GM12878 (cell line): ENCODE measurements at regions of chrX and their contacts with region 1.

Region 1: GRCh38 chrX:74781507-74782034 is 143.7 kb downstream of the NEXMIF start:
- DNase-seq: peak; percentile 76
- ATAC-seq: peak; percentile 73
- H3K4me3 ChIP-seq: no peak overlapping the region
- H3K27ac ChIP-seq: peak overlapping the region; percentile 85
- H3K4me1 ChIP-seq: peaks cover 10% of the 10 kb centered on the region
- H3K27me3 ChIP-seq: no peaks in the 10 kb centered on the region
- CTCF ChIP-seq: no peak
- EP300 ChIP-seq: no peak
- POLR2A ChIP-seq: no peak
- RAD21 ChIP-seq: peak; percentile 16; the same call in 1 of the 2 replicates

Region 2: GRCh38 chrX:74195605-74196004 is 586.0 kb before region 1 on chrX:
- CTCF ChIA-PET with region 1: no interaction called
- POLR2A ChIA-PET with region 1: no interaction called
- RAD21 ChIA-PET with region 1: no interaction called
- SMC1A ChIA-PET with region 1: no interaction called
- in situ Hi-C with region 1: no loop called
- intact Hi-C with region 1: no loop called
- DNase-seq: no peak
- ATAC-seq: no peak
- H3K4me3 ChIP-seq: no peak overlapping the region
- H3K27ac ChIP-seq: no peak overlapping the region
- H3K4me1 ChIP-seq: no peaks in the 10 kb centered on the region
- H3K27me3 ChIP-seq: no peaks in the 10 kb centered on the region
- CTCF ChIP-seq: no peak
- EP300 ChIP-seq: no peak
- POLR2A ChIP-seq: no peak
- RAD21 ChIP-seq: no peak

Region 3: DNA sequence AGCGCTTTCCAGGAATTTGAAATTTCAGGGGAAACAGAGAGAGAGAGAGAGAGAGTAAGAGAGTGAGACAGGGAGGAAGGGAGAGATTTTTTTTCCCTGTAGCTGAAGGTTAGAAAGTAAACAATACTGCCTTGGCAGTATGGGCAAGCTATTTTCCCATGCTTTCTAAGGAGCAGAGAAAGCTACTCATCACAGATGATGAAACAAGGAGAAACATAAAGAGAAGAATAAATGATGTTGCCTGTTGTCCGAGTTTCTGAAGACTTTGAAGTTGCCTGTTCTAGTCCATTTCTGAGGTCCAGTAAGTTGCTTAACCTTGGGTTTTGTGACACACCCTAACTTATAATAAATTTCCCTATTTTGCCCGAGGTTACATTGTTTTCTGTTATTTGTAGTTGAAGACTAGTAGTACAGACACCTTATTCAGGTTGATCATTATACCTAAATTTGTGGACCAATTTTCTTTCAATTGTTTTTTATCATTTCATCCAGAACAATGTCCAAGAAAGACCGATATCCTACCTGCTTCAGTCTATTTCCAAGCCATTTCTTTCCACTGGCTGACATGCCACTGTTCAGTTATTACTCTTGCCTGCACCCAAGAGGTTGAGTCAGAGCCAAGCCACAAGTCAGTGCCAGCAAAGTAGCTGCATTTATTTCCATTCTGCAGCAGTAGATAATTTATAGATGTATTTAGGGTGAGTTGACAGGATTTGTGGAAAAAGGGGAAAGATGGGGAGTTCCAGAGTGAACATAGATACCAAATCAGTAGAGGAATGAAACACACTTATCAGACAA is 409.9 kb before region 1 on chrX:
- CTCF ChIA-PET with region 1: no interaction called
- POLR2A ChIA-PET with region 1: no interaction called
- RAD21 ChIA-PET with region 1: no interaction called
- SMC1A ChIA-PET with region 1: no interaction called
- in situ Hi-C with region 1: no loop called
- intact Hi-C with region 1: no loop called
- DNase-seq: no peak
- ATAC-seq: no peak
- H3K4me3 ChIP-seq: no peak overlapping the region
- H3K27ac ChIP-seq: no peak overlapping the region
- H3K4me1 ChIP-seq: no peaks in the 10 kb centered on the region
- H3K27me3 ChIP-seq: no peaks in the 10 kb centered on the region
- CTCF ChIP-seq: no peak
- EP300 ChIP-seq: no peak
- POLR2A ChIP-seq: no peak
- RAD21 ChIP-seq: no peak

Region 4: DNA sequence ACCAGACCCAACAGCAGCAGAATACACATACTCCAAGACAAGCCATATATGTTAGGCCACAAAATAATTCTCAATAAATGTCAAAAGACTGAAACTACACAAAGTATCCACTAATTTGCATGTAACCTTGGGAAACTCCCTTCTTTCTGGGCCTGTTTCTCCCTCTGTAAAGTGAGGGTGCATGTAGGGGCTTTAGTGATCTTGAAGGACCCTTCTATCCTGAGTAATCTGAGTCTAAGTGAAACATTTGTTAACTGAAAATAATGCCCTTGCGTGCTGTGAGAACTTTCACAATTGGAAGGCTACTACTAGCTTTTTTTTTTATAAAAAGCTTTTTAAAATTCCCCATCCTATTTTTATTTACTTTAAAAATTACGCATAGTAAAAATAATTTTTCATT is 18.5 kb after region 1 on chrX:
- CTCF ChIA-PET with region 1: interaction called, 4 read pairs
- POLR2A ChIA-PET with region 1: interaction called, 7 read pairs
- RAD21 ChIA-PET with region 1: interaction called, 27 read pairs
- SMC1A ChIA-PET with region 1: interaction called, 8 read pairs
- in situ Hi-C with region 1: no loop called
- intact Hi-C with region 1: no loop called
- DNase-seq: no peak
- ATAC-seq: peak; percentile 83
- H3K4me3 ChIP-seq: no peak overlapping the region
- H3K27ac ChIP-seq: peak overlapping the region; percentile 18; the same call in 1 of the 2 replicates
- H3K4me1 ChIP-seq: no peaks in the 10 kb centered on the region
- H3K27me3 ChIP-seq: no peaks in the 10 kb centered on the region
- CTCF ChIP-seq: no peak
- EP300 ChIP-seq: no peak
- POLR2A ChIP-seq: no peak
- RAD21 ChIP-seq: peak; percentile 15; the same call in 1 of the 2 replicates

Region 5: GRCh38 chrX:74890676-74891430 is 109.3 kb after region 1 on chrX:
- CTCF ChIA-PET with region 1: interaction called, 4 read pairs
- POLR2A ChIA-PET with region 1: interaction called, 7 read pairs
- RAD21 ChIA-PET with region 1: interaction called, 36 read pairs
- SMC1A ChIA-PET with region 1: interaction called, 23 read pairs
- in situ Hi-C with region 1: loop called (anchors 5 kb)
- intact Hi-C with region 1: loop called (anchors 1 kb)
- DNase-seq: peak; percentile 80
- ATAC-seq: peak; percentile 95
- H3K4me3 ChIP-seq: no peak overlapping the region
- H3K27ac ChIP-seq: peak overlapping the region; percentile 45
- H3K4me1 ChIP-seq: no peaks in the 10 kb centered on the region
- H3K27me3 ChIP-seq: no peaks in the 10 kb centered on the region
- CTCF ChIP-seq: no peak
- EP300 ChIP-seq: no peak
- POLR2A ChIP-seq: no peak
- RAD21 ChIP-seq: peak; percentile 27; the same call in 1 of the 2 replicates

Region 6: GRCh38 chrX:75084757-75085156 is 303.2 kb after region 1 on chrX:
- CTCF ChIA-PET with region 1: no interaction called
- POLR2A ChIA-PET with region 1: no interaction called
- RAD21 ChIA-PET with region 1: no interaction called
- SMC1A ChIA-PET with region 1: no interaction called
- in situ Hi-C with region 1: no loop called
- intact Hi-C with region 1: no loop called
- DNase-seq: no peak
- ATAC-seq: no peak
- H3K4me3 ChIP-seq: no peak overlapping the region
- H3K27ac ChIP-seq: no peak overlapping the region
- H3K4me1 ChIP-seq: no peaks in the 10 kb centered on the region
- H3K27me3 ChIP-seq: no peaks in the 10 kb centered on the region
- CTCF ChIP-seq: no peak
- EP300 ChIP-seq: no peak
- POLR2A ChIP-seq: no peak
- RAD21 ChIP-seq: no peak

Region 7: GRCh38 chrX:76550016-76550415 is 1768.4 kb after region 1 on chrX:
- CTCF ChIA-PET with region 1: no interaction called
- POLR2A ChIA-PET with region 1: no interaction called
- RAD21 ChIA-PET with region 1: no interaction called
- SMC1A ChIA-PET with region 1: no interaction called
- in situ Hi-C with region 1: no loop called
- intact Hi-C with region 1: no loop called
- DNase-seq: no peak
- ATAC-seq: no peak
- H3K4me3 ChIP-seq: no peak overlapping the region
- H3K27ac ChIP-seq: no peak overlapping the region
- H3K4me1 ChIP-seq: no peaks in the 10 kb centered on the region
- H3K27me3 ChIP-seq: no peaks in the 10 kb centered on the region
- CTCF ChIP-seq: no peak
- EP300 ChIP-seq: no peak
- POLR2A ChIP-seq: no peak
- RAD21 ChIP-seq: no peak